A673 (cell line): ENCODE measurements at regions of chr5 and their contacts with region 1.

Region 1: DNA sequence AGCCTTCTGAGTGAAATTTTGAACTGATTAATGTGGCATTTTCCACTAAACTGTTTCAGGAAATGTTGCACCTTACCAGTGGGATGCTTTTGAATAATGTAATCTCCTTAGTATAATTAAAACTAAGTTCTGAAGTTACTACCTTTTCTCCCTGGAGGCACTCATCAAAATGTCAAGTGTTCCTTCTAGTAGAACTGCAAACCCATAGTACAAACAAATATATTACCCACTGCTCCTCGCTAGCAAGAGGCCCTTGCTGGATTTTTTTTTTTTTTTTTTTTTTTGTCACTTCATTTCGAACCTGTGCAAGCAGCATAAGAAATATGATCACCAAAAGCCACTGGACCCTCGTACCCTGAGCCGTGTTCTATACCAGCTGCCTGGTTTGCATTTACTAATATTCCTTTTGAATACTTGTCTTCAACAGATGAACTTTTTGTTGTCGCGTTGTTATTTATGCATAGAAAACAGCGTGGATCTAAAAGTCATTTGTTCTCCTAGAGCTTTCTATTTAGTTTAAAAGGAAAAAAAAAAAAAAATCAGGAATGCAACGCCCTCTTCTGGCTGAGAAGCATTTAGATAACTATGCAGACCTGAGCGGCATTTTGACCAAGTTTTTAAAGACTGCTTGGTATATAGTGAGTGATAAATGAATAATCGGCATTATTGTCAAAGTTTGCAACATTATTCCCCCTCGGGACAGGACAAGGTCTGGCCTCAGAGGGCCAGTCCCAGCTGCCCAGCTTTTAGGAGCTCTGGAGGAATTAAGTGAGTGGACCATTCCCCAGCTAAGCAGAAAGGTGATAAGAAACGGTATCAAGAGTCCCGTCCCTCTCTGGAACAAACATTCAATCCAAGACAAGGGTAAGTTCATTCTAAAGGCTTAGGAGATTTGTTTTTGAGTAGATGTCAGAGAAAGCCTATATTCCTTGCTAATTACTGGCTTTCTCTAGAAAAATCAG is 162.5 kb upstream of the KIF2A start:
- DNase-seq: peak; percentile 72
- H3K4me3 ChIP-seq: peak overlapping the region; percentile 12
- H3K27ac ChIP-seq: no peak overlapping the region
- H3K4me1 ChIP-seq: peaks cover 21% of the 10 kb centered on the region
- H3K27me3 ChIP-seq: no peaks in the 10 kb centered on the region
- CTCF ChIP-seq: peak; percentile 84

Region 2: DNA sequence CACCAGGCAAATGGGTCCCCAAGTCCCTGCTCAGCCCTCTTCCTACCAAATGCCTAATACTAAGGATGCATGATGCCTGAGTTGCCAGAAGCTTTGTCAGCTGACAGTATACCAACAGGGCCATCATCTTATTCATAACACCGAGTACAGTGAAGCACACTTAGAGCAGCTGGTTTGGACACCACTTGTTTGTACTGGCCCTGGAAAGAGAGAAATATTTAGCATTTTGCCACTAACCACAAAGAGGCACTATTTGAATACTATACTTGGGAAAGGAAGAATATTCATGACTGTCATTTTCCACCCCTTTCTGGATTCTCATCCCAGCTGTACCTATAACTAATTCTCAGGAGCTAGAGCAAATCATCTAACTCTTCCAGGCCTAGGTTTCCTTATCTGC is 201.9 kb before region 1 on chr5:
- CTCF ChIA-PET with region 1: interaction called, 6 read pairs
- POLR2A ChIA-PET with region 1: no interaction called
- intact Hi-C with region 1: loop called (anchors 5 kb)
- DNase-seq: no peak
- H3K4me3 ChIP-seq: no peak overlapping the region
- H3K27ac ChIP-seq: no peak overlapping the region
- H3K4me1 ChIP-seq: no peaks in the 10 kb centered on the region
- H3K27me3 ChIP-seq: no peaks in the 10 kb centered on the region
- CTCF ChIP-seq: 0 out of 2 replicates have a peak, but pooled peaks have one; percentile 13